ENCODE measurements at regions of chr13 and their contacts with region 1.

Region 1: GRCh38 chr13:83003185-83003584 is 879.1 kb downstream of the SLITRK1 start:
- DNase-seq: no peak

Region 2: GRCh38 chr13:82976499-82976898 is 26.7 kb before region 1 on chr13:
- intact Hi-C with region 1: loop called in 1 of 2 experiments (anchors 1 kb)
- DNase-seq: no peak

Measured in posterior vena cava (tissue), 2 donors.